Right ventricle myocardium inferior (tissue), 1 donor: ENCODE measurements at regions of chr1 and their contacts with region 1.

Region 1: DNA sequence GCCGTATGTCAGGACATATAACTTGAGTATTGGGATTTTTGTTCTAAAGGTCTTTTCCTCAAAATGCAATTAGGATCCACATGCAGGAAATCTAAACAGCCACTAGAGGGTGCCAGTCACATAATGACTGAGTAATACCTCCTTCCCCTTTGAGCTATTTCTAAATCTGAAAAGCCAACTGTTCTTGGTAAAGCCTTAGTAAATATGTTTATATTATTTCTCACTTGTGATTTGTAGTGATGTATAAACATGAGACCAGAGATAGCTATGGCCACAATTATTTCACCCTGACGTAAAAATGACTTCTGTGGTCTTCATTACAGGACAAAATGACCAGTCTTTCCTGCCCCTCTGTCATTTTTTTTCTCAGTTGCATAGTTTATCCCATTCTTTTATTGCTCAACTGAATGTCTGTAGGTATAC is 41.0 kb upstream of the DR1 start:
- DNase-seq: no peak
- ATAC-seq: no peak

Region 2: GRCh38 chr1:93345633-93346420 is 41.1 kb after region 1 on chr1 and contains the start of gene DR1:
- intact Hi-C with region 1: loop called (anchors 5 kb)
- DNase-seq: peak; percentile 96
- ATAC-seq: peak; percentile 97
- total RNA-seq, gene DR1: 37.1 TPM

Region 3: DNA sequence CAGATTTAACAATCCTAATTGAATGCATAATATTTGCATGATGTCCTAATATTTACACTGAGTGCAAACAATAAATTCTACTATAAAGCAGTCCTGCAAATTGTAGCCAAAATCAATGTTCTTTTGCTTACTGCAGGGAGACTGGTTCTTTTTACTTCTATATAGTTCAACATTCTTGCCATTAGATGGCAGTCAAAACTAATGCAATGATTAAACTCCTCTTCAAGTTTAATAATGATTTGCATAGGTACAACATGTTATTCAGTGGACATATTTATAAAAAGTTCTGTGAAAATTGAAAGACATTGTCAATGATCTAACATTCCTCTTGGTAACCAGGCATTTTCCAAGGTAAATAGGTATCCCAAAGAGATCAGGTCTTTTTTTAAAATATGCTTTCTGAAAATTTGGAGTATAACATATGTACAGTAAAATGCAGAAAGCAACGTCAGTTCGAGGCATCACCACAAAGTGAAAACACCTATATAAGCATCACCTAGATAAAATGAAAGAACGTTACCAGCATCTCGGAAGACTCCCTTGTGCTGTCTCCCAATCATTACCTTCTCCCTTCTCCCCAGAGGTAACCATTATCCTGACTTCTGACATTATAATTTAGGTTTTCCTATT is 133.4 kb after region 1 on chr1:
- intact Hi-C with region 1: loop called (anchors 5 kb)
- DNase-seq: no peak
- ATAC-seq: no peak

Region 4: GRCh38 chr1:93629099-93630059 is 324.7 kb after region 1 on chr1:
- intact Hi-C with region 1: loop called (anchors 10 kb)
- DNase-seq: no peak
- ATAC-seq: peak; percentile 59

Region 5: GRCh38 chr1:93846211-93846991 is 541.7 kb after region 1 on chr1:
- intact Hi-C with region 1: loop called (anchors 2 kb)
- DNase-seq: peak; percentile 97
- ATAC-seq: peak; percentile 77